Activated CD4-positive, alpha-beta T cell treated with anti-CD3 and anti-CD28 coated beads for 36 hours (primary cell): ENCODE measurements at regions of chr4 and their contacts with region 1.

Region 1: GRCh38 chr4:1712216-1713002 is at the start of gene SLBP:
- DNase-seq: peak; percentile 100
- ATAC-seq: peak; percentile 89
- H3K4me3 Mint-ChIP-seq: peak within 1 kb of the TSS; percentile 99
- H3K27ac Mint-ChIP-seq: peak within 1 kb of the TSS; percentile 98
- H3K4me1 Mint-ChIP-seq: peaks cover 58% of the 10 kb centered on the region
- H3K27me3 Mint-ChIP-seq: no peaks in the 10 kb centered on the region
- total RNA-seq, gene SLBP: 113 to 134 TPM

Region 2: GRCh38 chr4:931960-932712 is 780.3 kb before region 1 on chr4 and contains the starts of genes GAK and TMEM175:
- CTCF ChIA-PET with region 1: no interaction called
- POLR2A ChIA-PET with region 1: no interaction called
- intact Hi-C with region 1: loop called in 1 of 2 experiments (anchors 5 kb)
- DNase-seq: peak; percentile 98
- ATAC-seq: peak; percentile 95
- H3K4me3 Mint-ChIP-seq: peak within 1 kb of the TSS; percentile 87
- H3K27ac Mint-ChIP-seq: peak within 1 kb of the TSS; percentile 89
- H3K4me1 Mint-ChIP-seq: peaks cover 29% of the 10 kb centered on the region
- H3K27me3 Mint-ChIP-seq: no peaks in the 10 kb centered on the region
- total RNA-seq, gene GAK: 82.9 to 88.0 TPM
- total RNA-seq, gene TMEM175: 15.2 to 17.3 TPM

Region 3: DNA sequence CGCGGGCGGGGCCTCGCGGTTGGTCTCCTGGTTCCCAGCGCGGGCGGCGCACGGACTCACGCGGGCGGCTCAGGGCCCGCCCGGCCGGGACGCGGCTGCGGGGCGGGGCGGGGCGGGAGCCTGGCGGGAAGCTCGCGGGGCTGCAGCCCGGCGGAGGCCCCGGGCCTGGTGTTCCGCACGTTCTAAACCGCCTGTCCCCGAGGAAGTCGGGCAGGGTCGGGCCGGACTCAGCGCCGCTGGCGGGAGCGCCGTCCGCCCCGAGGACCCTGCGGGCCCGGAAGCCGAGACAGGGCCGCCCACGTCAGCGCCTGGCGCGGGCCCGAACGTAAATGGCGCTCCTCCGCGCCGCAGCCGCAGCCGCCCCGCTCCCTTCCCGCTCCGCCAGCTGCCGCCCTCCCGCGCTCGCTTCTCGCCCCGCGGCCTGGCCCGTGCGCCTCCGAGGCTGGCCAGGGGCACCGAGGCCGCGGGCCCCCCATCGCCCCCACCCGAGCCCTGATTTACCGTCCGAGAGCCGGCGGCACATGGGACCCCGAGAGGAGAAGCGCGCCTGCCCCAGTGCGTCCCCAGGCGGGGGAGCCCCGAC is 463.2 kb before region 1 on chr4:
- CTCF ChIA-PET with region 1: no interaction called
- POLR2A ChIA-PET with region 1: no interaction called
- intact Hi-C with region 1: loop called in 1 of 2 experiments (anchors 1 kb)
- DNase-seq: peak; percentile 90
- ATAC-seq: peak; percentile 63
- H3K4me3 Mint-ChIP-seq: peak overlapping the region; percentile 80
- H3K27ac Mint-ChIP-seq: peak overlapping the region; percentile 94
- H3K4me1 Mint-ChIP-seq: peaks cover 74% of the 10 kb centered on the region
- H3K27me3 Mint-ChIP-seq: no peaks in the 10 kb centered on the region

Region 4: GRCh38 chr4:1683736-1684505 is 28.5 kb before region 1 on chr4 and contains the start of gene FAM53A:
- CTCF ChIA-PET with region 1: no interaction called
- POLR2A ChIA-PET with region 1: interaction called, 3 read pairs
- intact Hi-C with region 1: loop called (anchors 1 to 2 kb)
- DNase-seq: no peak
- ATAC-seq: peak; percentile 96
- H3K4me3 Mint-ChIP-seq: peak within 1 kb of the TSS; percentile 69
- H3K27ac Mint-ChIP-seq: peak within 1 kb of the TSS; percentile 69
- H3K4me1 Mint-ChIP-seq: peaks cover 12% of the 10 kb centered on the region
- H3K27me3 Mint-ChIP-seq: no peaks in the 10 kb centered on the region
- total RNA-seq, gene FAM53A: 2.0 to 2.5 TPM

Region 5: DNA sequence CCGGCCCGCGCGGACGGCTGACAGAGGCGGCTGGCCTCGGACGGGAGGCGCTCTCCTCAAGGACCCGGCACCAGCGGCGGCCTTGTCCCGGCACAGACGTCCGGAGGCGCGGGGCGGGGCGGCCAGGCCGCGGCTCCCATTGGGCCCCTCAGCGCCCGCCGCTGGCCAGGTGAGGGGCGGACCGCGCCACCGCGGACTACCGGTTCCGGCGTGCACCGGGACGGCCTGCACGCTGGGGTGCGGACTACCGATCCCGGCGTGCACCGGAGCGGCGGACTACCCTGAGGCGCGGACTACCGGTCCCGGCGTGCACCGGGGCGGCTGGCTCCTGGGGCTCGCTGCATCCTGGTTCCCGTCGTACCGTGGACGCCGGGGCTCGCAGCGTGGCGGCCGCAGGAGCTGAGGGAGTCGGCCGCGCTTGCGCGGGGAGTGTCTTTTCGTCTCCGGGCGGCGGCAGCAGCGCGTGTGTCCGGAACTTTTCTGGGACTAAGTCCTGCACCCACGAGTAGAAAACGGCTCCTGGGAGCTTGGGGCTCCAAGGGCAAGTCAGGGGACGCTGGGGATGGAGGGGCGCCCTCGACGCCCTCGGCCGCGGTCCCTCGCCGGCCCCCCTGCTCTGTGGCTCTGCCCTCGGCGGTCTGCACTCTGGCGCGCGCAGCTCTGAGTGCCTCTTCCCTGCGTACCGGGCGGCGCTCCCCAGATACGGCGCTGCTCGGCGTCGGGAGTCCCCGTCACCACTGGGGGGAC is 143.8 kb after region 1 on chr4 and contains the start of gene LETM1:
- CTCF ChIA-PET with region 1: interaction called, 3 read pairs
- POLR2A ChIA-PET with region 1: no interaction called
- intact Hi-C with region 1: loop called (anchors 1 kb)
- DNase-seq: peak; percentile 97
- ATAC-seq: peak; percentile 99
- H3K4me3 Mint-ChIP-seq: peak within 1 kb of the TSS; percentile 78
- H3K27ac Mint-ChIP-seq: peak within 1 kb of the TSS; percentile 55
- H3K4me1 Mint-ChIP-seq: peaks cover 40% of the 10 kb centered on the region
- H3K27me3 Mint-ChIP-seq: no peaks in the 10 kb centered on the region
- total RNA-seq, gene LETM1: 41.6 to 51.3 TPM

Region 6: DNA sequence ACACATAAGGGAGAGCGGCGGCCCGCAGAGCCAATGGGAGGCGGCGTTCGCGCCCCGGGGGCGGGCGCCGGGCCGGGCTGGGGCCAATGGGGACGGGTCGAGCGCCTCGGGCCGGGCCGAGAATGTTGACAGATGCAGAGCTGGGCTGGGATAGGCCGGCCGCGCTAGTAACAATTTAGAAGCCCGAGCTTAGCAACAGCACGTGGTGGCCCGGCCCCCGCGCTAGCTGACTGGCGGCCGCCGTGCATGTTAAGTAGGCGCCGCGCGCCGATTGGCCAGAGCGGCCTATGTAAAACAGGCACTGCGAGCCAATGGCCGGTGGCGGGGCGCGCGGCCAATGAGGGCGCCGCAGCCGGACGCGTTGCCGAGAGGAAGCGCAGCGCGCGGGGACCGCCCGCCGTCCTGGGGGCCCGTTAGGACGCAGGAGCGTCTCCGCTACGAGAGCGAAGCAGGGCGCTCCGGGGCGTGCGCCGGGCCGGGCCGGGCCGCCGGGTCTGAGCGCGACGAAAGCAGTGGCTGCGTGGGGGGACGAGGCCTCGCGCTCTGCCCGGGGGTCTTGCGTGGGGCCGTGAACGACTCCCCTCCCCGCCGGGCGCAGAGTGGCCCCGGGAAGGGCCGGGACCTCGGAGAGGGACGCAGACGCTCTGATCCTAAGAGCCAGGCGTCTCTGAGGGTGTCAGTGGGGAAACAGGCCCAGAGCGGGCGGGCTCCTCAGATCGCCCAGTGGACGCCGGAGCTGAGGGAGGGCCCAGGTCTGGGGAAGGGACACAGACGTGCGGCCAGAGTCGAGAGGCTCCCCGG is 549.9 kb after region 1 on chr4:
- CTCF ChIA-PET with region 1: no interaction called
- POLR2A ChIA-PET with region 1: no interaction called
- intact Hi-C with region 1: loop called in 1 of 2 experiments (anchors 5 kb)
- DNase-seq: peak; percentile 99
- ATAC-seq: peak; percentile 96
- H3K4me3 Mint-ChIP-seq: peak overlapping the region; percentile 61
- H3K27ac Mint-ChIP-seq: no peak overlapping the region
- H3K4me1 Mint-ChIP-seq: peaks cover 2% of the 10 kb centered on the region
- H3K27me3 Mint-ChIP-seq: no peaks in the 10 kb centered on the region

Region 7: GRCh38 chr4:3074078-3074795 is 1361.8 kb after region 1 on chr4 and contains the starts of genes HTT and HTT-AS:
- CTCF ChIA-PET with region 1: no interaction called
- POLR2A ChIA-PET with region 1: no interaction called
- intact Hi-C with region 1: loop called in 1 of 2 experiments (anchors 1 kb)
- DNase-seq: peak; percentile 100
- ATAC-seq: peak; percentile 89
- H3K4me3 Mint-ChIP-seq: peak within 1 kb of the TSS; percentile 95
- H3K27ac Mint-ChIP-seq: peak within 1 kb of the TSS; percentile 90
- H3K4me1 Mint-ChIP-seq: peaks cover 24% of the 10 kb centered on the region
- H3K27me3 Mint-ChIP-seq: no peaks in the 10 kb centered on the region
- total RNA-seq, gene HTT: 80.1 to 127 TPM
- total RNA-seq, gene HTT-AS: not detected